Posterior vena cava (tissue), 2 donors: ENCODE measurements at regions of chr12 and their contacts with region 1.

Region 1: DNA sequence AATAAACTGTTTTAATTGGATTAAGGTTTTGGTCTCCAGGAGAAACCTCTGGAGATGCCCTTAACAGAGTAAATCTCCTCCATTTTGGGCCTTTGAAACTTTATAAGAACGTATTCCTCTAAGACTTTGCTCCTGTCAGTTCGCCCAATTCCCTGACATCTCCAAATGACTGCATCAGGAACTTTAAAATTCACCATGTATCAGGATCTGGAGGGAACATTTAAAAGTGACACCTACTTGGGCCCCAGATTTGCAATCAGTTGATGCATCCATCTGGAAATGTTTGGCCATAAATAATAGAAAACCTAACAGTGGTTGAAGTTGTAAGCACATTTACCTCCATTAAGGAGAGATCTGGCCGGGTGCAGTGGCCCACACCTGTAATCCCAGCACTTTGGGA is 144.1 kb upstream of the WSCD2 start:
- DNase-seq: no peak

Region 2: DNA sequence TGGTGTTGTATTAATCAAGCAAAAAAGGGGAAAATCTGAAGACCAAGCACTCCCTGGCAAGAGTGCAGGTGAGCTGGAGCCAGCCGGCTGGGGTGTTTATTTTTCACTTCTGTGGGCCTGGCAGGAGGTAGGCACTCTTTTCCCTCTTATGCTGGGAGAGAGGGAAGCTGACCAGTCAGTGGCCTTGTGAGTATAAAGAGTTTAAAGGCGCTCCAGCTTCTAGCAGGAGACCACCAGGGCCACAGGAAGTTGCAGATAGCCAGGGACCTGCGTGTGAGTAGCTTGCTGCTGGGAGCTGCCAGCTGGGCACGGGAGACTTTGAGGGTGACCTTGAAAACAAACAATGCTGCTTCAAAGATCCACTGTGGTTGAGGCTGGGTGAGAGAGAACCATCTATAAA is 516.8 kb before region 1 on chr12:
- intact Hi-C with region 1: no loop called
- DNase-seq: no peak

Region 3: GRCh38 chr12:108502922-108503321 is 518.0 kb after region 1 on chr12:
- intact Hi-C with region 1: loop called in 1 of 2 experiments (anchors 5 kb)
- DNase-seq: no peak